ENCODE measurements at regions of chr17 and their contacts with region 1.

Region 1: GRCh38 chr17:6473128-6473767 is 29.0 kb downstream of the PIMREG start:
- DNase-seq: peak; percentile 91
- H3K4me3 ChIP-seq: no peak overlapping the region
- H3K27ac ChIP-seq: peak overlapping the region in 6 of 8 donors; percentile 19 to 66 (median 57)
- H3K4me1 ChIP-seq: peaks cover 0 to 71% (median 35%) of the 10 kb centered on the region in 6 donors
- H3K27me3 ChIP-seq: no peaks in the 10 kb centered on the region
- CTCF ChIP-seq: peak; percentile 74 to 94 (median 92)
- POLR2A ChIP-seq: no peak

Region 2: DNA sequence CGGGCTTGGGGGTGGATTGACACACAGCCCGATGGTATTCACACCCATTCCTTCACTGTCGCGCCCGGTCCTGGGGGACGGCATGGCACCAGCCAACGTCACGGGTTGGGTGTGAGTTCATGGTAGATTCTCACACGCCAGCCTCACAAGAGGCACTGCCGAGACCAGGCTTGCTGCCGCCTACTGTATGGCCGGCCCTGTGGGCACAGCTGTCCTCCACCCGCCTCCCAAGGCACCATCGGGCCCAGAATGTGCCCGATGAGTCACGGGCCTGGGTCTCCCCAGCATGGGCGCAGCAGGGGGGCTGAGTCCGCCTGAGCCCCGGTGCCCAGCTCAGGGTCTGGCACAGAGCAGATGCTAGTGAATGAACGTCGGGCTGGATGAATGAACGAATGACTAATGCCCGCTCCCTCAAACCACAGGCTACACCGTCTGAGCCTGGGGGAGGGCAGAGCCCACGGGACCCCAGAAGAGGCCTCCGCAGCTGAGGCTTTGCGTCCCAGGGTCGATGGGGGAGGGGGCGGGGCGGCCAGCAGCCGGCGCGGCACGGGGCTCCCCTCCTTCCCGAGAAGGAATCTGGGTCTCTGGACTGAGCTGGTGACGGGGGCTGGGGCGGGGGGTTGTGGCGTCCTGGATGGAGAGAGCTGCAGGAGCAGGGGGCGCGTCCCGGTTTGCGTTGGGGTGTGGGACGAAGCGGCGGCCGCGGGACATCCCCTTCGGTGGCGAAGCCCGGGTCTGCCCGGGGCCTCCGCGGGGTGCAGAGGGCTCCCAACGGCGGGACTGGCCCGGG is 82.3 kb after region 1 on chr17:
- intact Hi-C with region 1: loop called (anchors 5 kb)
- DNase-seq: no peak
- H3K4me3 ChIP-seq: peak overlapping the region; percentile 51 to 82 (median 61)
- H3K27ac ChIP-seq: peak overlapping the region; percentile 63 to 90 (median 84)
- H3K4me1 ChIP-seq: peaks cover 0 to 89% (median 52%) of the 10 kb centered on the region in 6 donors
- H3K27me3 ChIP-seq: peaks cover 0 to 51% (median 18%) of the 10 kb centered on the region in 7 donors
- CTCF ChIP-seq: no peak
- POLR2A ChIP-seq: no peak

Region 3: GRCh38 chr17:6648181-6648580 is 174.9 kb after region 1 on chr17:
- intact Hi-C with region 1: loop called (anchors 5 kb)
- DNase-seq: no peak
- H3K4me3 ChIP-seq: no peak overlapping the region
- H3K27ac ChIP-seq: no peak overlapping the region
- H3K4me1 ChIP-seq: peaks cover 22 to 88% (median 52%) of the 10 kb centered on the region in 6 donors
- H3K27me3 ChIP-seq: peaks cover 0 to 9% (median 0%) of the 10 kb centered on the region in 7 donors
- CTCF ChIP-seq: peak in 7 of 11 experiments; percentile 14 to 41 (median 39)
- POLR2A ChIP-seq: no peak

Region 4: GRCh38 chr17:6701719-6702118 is 228.5 kb after region 1 on chr17:
- intact Hi-C with region 1: no loop called
- DNase-seq: no peak
- H3K4me3 ChIP-seq: no peak overlapping the region
- H3K27ac ChIP-seq: no peak overlapping the region
- H3K4me1 ChIP-seq: peaks cover 0 to 8% (median 3%) of the 10 kb centered on the region in 6 donors
- H3K27me3 ChIP-seq: peaks cover 0 to 36% (median 0%) of the 10 kb centered on the region in 7 donors
- CTCF ChIP-seq: peak in 5 of 11 experiments; percentile 46 to 57 (median 53)
- POLR2A ChIP-seq: no peak

Measured in spleen (tissue), 13 donors.